Posterior vena cava (tissue), 2 donors: ENCODE measurements at regions of chrX and their contacts with region 1.

Region 1: GRCh38 chrX:74705269-74705668 is 90.8 kb upstream of the RLIM start:
- DNase-seq: no peak

Region 2: GRCh38 chrX:73239242-73239641 is 1466.0 kb before region 1 on chrX:
- intact Hi-C with region 1: loop called in 1 of 2 experiments (anchors 5 kb)
- DNase-seq: no peak